Right cardiac atrium (tissue), 5 donors: ENCODE measurements at regions of chr7 and their contacts with region 1.

Region 1: DNA sequence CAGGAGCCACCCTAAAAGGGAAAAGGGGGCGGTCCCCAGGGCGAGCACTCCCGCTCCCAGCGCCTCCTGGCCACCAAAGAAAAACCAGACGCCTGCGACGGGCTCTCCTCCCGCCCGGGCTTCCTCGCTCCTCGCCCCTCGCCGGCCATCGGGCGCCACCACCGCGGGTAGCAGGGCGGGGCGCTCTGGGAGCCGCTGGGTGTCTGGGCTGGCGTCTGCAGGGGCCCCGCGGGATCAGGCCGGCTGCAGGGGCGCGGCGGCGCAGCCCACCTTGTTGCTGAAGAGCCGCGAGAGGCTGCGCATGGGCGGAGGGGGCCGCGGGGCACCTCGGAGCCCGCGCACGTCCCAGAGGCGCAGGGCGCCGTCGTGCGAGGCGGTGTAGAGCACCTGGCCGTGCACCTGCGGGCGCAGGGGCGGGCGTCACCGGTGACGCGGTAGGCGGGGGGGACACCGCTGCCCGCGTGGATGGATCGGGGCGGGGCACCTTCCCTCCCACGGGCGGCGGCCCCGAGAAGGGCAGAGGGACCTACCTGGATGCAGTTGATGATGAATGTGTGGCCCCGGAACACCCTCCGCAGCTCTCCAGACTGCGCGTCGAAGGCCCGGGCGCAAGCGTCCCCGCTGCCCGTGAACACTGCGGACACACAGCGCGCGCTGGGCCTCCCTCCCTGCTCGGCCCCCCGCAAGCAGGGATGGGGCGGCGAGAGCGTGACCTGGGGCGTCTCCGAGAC is 28.3 kb downstream of the WDR86 start:
- DNase-seq: no peak
- ATAC-seq: peak; percentile 20 to 26
- H3K4me3 ChIP-seq: peak overlapping the region; percentile 6
- H3K27ac ChIP-seq: no peak overlapping the region
- H3K4me1 ChIP-seq: no peaks in the 10 kb centered on the region
- H3K27me3 ChIP-seq: no peaks in the 10 kb centered on the region

Region 2: GRCh38 chr7:150962553-150963399 is 418.7 kb before region 1 on chr7:
- intact Hi-C with region 1: no loop called
- DNase-seq: peak; percentile 62 to 88 (median 78)
- ATAC-seq: peak; percentile 54 to 65
- H3K4me3 ChIP-seq: no peak overlapping the region
- H3K27ac ChIP-seq: peak overlapping the region; percentile 87
- H3K4me1 ChIP-seq: peaks cover 14% of the 10 kb centered on the region
- H3K27me3 ChIP-seq: no peaks in the 10 kb centered on the region

Region 3: DNA sequence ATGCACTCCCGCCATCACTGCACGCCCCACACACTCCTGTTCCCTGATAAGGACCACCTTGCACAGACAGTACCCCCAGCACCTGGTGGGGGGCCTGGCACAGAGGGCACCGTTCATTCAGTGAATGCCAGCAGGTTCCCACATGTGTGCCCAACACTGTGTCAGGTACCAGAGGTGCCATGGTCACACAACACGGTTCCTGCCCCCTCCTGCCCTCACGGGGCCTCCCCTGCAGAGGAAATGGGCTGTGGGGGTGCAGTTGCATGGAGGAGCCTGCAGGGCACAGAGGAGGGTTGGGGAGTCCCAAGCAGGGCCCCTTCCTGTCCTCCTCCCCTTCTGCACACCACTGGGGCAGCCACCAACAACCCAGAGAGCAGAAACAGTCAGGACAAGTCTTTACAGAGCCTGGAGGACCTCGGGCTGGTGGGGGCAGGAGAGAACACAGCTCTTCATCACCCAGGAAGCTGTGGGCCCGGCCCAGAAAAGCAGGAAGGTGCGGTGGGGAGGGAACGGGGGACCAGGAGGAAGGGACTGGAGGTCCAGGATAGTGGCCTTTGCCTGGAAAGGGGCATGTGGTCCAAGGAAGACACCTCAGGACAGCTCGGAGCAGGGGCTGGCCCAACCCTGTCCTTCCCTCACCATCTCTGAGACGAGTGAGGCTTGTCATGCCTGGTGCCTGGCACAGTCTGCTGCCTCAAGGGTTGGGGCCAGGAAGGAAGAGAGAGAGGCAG is 51.4 kb after region 1 on chr7:
- intact Hi-C with region 1: loop called in 3 of 4 experiments (anchors 5 to 10 kb)
- DNase-seq: no peak
- ATAC-seq: no peak
- H3K4me3 ChIP-seq: no peak overlapping the region
- H3K27ac ChIP-seq: no peak overlapping the region
- H3K4me1 ChIP-seq: no peaks in the 10 kb centered on the region
- H3K27me3 ChIP-seq: no peaks in the 10 kb centered on the region

Region 4: DNA sequence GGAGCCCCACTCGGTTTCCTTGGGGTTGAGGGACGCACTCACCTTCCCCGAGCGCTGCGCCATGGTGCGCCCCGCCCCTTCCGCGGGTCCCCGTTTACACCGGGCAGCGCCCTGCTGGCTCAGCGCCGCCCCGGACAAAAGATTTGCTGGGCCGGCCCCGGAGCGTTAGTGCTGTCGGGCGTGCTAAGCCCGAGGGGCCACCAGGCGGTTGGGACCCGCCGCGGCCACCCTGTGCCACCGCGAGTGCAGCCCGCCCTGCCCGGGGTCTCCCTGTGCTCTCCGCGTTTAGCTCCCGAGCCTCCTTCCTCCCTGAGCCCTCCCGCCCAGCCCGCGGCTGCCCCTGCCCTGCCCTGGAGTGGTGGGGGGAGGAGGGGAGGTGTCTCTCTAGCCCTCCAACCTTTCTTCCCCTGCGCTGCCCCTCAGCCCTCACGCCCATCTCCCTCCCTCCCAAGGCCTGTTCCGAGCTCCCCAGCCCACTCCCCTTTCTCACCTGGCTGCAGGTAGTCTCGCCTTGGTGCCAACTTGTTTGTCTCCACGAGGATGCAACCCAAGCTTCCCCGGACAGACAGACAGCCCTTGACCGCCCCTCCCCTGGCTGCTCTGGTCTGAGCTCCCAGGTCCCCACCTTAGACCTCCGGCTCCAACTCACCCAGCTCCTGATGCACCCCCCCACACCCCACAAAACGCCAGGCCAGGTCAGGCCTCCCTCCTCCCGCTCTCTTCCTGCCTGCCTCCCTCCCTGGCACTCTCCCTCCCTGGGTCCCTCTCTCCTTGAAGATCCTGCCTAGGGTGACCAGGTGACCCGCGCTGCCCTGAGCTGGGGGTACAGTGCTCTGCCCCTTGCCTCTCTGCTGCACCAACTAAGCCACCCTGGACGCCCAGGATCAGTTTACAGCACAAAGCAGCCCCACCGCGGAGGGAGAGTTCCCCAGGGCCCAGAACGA is 58.6 kb after region 1 on chr7 and contains the start of gene CRYGN:
- intact Hi-C with region 1: loop called in 3 of 4 experiments (anchors 5 to 10 kb)
- DNase-seq: no peak
- ATAC-seq: peak in 1 of 2 donors; percentile 26
- H3K4me3 ChIP-seq: peak within 1 kb of the TSS; percentile 13
- H3K27ac ChIP-seq: no peak within 1 kb of the TSS
- H3K4me1 ChIP-seq: no peaks in the 10 kb centered on the region
- H3K27me3 ChIP-seq: no peaks in the 10 kb centered on the region
- total RNA-seq, gene CRYGN: 0.11 TPM in 1 of 4 donors, not detected in the others

Region 5: GRCh38 chr7:151448261-151449252 is 67.0 kb after region 1 on chr7:
- intact Hi-C with region 1: loop called in 1 of 4 experiments (anchors 10 kb)
- DNase-seq: peak; percentile 73 to 87 (median 81)
- ATAC-seq: peak; percentile 87 to 88
- H3K4me3 ChIP-seq: peak overlapping the region; percentile 74
- H3K27ac ChIP-seq: no peak overlapping the region
- H3K4me1 ChIP-seq: no peaks in the 10 kb centered on the region
- H3K27me3 ChIP-seq: no peaks in the 10 kb centered on the region

Region 6: DNA sequence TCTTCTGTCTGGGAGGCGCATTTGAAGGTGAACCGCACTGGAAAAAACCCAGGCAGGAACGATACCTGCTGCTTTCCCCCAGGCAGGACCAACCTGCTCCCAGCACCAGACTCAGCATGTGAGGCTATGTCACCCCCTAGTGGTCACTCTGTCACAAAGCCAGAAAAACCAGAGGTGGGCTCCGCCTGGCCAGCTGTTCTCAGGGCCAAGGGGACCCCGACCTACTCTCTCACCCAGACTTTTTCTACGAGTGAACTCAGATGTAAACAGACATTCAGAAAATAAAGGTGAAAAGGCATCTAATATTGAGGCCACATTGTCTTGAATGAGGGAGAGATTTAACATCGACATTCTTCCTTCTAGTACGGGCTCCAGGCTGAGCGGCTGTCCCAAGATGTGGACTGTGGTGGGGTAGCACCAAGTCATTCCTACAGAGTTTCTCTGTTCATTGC is 378.1 kb after region 1 on chr7:
- intact Hi-C with region 1: loop called in 2 of 4 experiments (anchors 10 kb)
- DNase-seq: peak in 1 of 3 donors; percentile 60
- ATAC-seq: peak; percentile 50 to 59
- H3K4me3 ChIP-seq: no peak overlapping the region
- H3K27ac ChIP-seq: no peak overlapping the region
- H3K4me1 ChIP-seq: peaks cover 2% of the 10 kb centered on the region
- H3K27me3 ChIP-seq: no peaks in the 10 kb centered on the region